HepG2 (cell line): ENCODE measurements at regions of chr4 and their contacts with region 1.

Region 1: DNA sequence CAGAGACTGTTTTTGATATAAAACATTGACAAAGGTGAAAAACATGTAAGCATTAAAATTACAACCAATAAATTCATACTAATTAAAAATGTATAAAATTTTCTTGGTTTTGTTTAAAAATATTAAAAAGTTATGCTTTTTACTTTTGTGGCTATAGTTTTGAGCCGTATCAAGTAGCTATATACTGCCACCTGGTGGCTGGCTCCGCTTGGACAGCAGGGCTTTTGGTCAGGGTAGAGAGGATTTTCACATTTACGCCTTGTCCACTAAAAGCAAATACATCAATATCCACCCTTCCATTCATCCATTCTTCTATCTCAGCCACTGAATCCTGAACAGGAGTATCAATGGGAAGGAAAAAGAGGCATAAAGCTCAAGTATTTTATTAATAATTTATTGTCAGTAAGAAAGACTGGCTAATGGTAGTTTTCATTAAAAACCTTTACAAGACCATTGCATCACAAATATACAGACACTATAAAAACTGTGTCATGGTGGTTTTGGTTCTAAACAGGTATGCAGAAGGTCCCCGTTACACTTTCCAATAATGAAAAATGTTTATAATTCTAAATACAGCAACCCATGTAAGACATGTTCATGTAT is 32.1 kb upstream of the MTNR1A start:
- DNase-seq: peak; percentile 48
- ATAC-seq: peak; percentile 78
- H3K4me3 ChIP-seq: no peak overlapping the region
- H3K27ac ChIP-seq: no peak overlapping the region
- H3K4me1 ChIP-seq: 0 out of 2 replicates have a peak, but pooled peaks cover 2% of the 10 kb centered on the region
- H3K27me3 ChIP-seq: no peaks in the 10 kb centered on the region
- CTCF ChIP-seq: peak; percentile 69
- EP300 ChIP-seq: no peak
- POLR2A ChIP-seq: no peak
- RAD21 ChIP-seq: peak; percentile 36; the same call in 1 of the 2 replicates

Region 2: DNA sequence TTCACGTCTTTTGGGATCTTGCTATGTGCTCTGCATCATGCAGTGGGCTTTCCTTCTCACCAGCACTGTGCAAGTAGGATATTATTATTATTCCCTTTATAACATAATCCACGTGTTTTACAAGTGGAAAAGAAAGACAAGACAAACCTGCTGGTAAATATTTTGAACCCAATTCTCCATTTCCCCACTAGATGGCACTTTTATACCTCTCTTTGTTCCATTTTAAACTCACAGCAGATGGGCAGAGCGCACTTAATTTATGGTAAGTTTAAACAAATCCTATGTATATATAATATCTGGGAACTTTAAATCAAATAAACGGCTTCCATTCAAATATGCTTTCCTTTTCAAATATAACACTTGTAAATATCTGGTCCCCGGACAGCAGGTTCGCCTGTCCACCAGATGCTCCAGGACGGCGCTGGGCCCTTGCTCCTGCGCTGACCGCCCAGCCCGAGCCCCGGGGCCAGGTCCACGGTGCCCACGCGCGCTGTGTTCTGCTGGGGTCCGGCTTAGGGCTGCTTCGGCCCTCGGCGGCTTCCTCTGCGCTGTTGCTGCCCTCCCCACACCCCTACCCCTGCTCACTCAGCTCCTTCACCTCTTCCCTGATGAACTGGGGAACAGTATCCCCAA is 290.4 kb before region 1 on chr4:
- CTCF ChIA-PET with region 1: interaction called, 20 read pairs
- POLR2A ChIA-PET with region 1: no interaction called
- in situ Hi-C with region 1: loop called (anchors 10 kb)
- intact Hi-C with region 1: loop called (anchors 1 kb)
- DNase-seq: peak; percentile 32
- ATAC-seq: peak; percentile 24; the same call in 2 of the 3 replicates
- H3K4me3 ChIP-seq: no peak overlapping the region
- H3K27ac ChIP-seq: no peak overlapping the region
- H3K4me1 ChIP-seq: peaks cover 6% of the 10 kb centered on the region; the same call in 1 of the 2 replicates
- H3K27me3 ChIP-seq: peaks cover 0 to 9% of the 10 kb centered on the region in 2 experiments; a peak in 1 of 5 replicates
- CTCF ChIP-seq: peak; percentile 71
- EP300 ChIP-seq: no peak
- POLR2A ChIP-seq: no peak
- RAD21 ChIP-seq: peak; percentile 55; the same call in 1 of the 2 replicates

Region 3: DNA sequence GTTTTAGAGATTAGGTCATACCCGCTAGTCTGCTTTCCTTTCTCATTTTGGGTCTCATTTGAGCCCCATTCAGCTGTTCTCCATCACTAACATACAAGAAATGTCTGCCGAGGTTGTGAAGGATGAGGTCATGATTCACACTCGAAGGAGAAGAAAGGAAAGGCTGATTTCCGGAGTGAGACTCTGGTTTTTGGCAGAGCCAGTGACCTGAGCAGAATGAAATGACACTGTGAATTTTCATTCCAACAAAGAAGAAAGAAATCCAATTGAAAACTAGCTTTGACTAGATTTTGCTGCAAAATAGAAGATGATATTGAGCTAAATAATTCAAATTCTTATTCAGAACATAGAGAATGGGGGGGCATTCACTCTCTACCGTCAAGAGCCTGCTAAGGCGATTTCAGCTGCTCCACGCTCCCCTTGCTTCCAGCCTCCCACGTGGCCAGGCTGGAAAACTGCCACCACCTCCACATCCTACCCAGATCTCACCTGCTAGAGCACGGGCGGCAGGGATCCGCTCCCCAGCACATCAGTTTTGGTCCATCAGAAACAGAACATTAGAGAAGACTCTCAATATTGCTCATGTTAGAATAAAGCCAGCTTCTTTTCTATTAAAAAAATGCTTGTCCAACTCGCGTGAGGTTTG is 282.5 kb before region 1 on chr4:
- CTCF ChIA-PET with region 1: no interaction called
- POLR2A ChIA-PET with region 1: no interaction called
- in situ Hi-C with region 1: loop called (anchors 10 kb)
- intact Hi-C with region 1: no loop called
- DNase-seq: no peak
- ATAC-seq: no peak
- H3K4me3 ChIP-seq: no peak overlapping the region
- H3K27ac ChIP-seq: no peak overlapping the region
- H3K4me1 ChIP-seq: no peaks in the 10 kb centered on the region
- H3K27me3 ChIP-seq: peaks cover 0 to 31% of the 10 kb centered on the region in 2 experiments; a peak in 2 of 5 replicates
- CTCF ChIP-seq: no peak
- EP300 ChIP-seq: no peak
- POLR2A ChIP-seq: no peak
- RAD21 ChIP-seq: no peak

Region 4: DNA sequence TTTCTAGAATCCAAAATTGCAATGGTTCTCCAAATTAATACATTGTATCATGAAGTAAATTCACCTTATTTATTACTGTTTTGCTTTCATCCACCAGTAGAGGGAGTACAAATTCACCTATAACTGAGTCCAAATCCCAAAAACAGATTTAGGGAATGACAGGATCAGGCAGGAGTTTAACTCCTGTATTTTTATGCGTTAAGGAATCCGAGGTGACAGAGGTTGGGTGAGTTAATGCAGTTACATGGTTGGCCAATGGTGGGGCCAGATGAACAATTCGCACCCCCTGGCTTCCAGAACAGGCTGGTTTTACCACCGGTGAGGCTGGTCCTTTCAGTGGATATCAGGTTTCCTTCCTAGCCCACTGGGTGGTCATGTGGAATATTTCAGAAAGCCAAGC is 114.6 kb before region 1 on chr4:
- CTCF ChIA-PET with region 1: interaction called, 7 read pairs
- POLR2A ChIA-PET with region 1: no interaction called
- in situ Hi-C with region 1: no loop called
- intact Hi-C with region 1: loop called (anchors 1 kb)
- DNase-seq: peak; percentile 16
- ATAC-seq: no peak
- H3K4me3 ChIP-seq: no peak overlapping the region
- H3K27ac ChIP-seq: no peak overlapping the region
- H3K4me1 ChIP-seq: no peaks in the 10 kb centered on the region
- H3K27me3 ChIP-seq: peaks cover 0 to 1% of the 10 kb centered on the region in 2 experiments; a peak in 1 of 5 replicates
- CTCF ChIP-seq: peak; percentile 55
- EP300 ChIP-seq: no peak
- POLR2A ChIP-seq: no peak
- RAD21 ChIP-seq: no peak; the same call in 1 of the 2 replicates